Endothelial cell of umbilical vein (primary cell): ENCODE measurements at regions of chr9 and their contacts with region 1.

Region 1: DNA sequence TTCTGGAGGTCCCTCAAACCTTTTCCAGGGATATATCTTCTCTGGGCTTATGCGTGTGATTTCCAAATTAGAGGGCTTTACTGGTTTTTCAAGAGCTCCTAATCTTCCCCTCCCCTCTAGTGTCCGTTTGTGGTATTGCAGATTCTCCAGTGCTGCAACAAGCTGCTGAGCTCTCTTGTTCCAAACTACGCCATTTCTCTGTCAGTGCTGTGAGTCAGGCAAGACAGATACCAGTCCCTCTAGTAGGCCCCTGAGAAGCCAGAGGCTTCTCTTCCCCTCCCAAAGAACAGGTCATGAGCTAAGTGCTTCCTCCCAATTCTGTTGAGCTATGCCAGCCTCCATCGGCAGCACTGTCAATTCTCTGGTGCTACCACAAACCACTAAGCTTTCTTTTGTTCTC is 149.5 kb downstream of the FANCC start:
- DNase-seq: peak; percentile 82
- H3K4me3 ChIP-seq: no peak overlapping the region
- H3K27ac ChIP-seq: no peak overlapping the region
- H3K4me1 ChIP-seq: peaks cover 16% of the 10 kb centered on the region
- H3K27me3 ChIP-seq: no peaks in the 10 kb centered on the region
- CTCF ChIP-seq: peak; percentile 74 to 82
- POLR2A ChIP-seq: no peak

Region 2: GRCh38 chr9:94681508-94681907 is 486.5 kb before region 1 on chr9:
- CTCF ChIA-PET with region 1: interaction called, 94 read pairs
- POLR2A ChIA-PET with region 1: interaction called, 4 read pairs
- dilution Hi-C with region 1: no loop called
- intact Hi-C with region 1: loop called (anchors 1 kb)
- DNase-seq: peak; percentile 67
- H3K4me3 ChIP-seq: no peak overlapping the region
- H3K27ac ChIP-seq: no peak overlapping the region
- H3K4me1 ChIP-seq: no peaks in the 10 kb centered on the region
- H3K27me3 ChIP-seq: peaks cover 3 to 4% of the 10 kb centered on the region in 2 experiments
- CTCF ChIP-seq: peak; percentile 68 to 74
- POLR2A ChIP-seq: no peak

Region 3: DNA sequence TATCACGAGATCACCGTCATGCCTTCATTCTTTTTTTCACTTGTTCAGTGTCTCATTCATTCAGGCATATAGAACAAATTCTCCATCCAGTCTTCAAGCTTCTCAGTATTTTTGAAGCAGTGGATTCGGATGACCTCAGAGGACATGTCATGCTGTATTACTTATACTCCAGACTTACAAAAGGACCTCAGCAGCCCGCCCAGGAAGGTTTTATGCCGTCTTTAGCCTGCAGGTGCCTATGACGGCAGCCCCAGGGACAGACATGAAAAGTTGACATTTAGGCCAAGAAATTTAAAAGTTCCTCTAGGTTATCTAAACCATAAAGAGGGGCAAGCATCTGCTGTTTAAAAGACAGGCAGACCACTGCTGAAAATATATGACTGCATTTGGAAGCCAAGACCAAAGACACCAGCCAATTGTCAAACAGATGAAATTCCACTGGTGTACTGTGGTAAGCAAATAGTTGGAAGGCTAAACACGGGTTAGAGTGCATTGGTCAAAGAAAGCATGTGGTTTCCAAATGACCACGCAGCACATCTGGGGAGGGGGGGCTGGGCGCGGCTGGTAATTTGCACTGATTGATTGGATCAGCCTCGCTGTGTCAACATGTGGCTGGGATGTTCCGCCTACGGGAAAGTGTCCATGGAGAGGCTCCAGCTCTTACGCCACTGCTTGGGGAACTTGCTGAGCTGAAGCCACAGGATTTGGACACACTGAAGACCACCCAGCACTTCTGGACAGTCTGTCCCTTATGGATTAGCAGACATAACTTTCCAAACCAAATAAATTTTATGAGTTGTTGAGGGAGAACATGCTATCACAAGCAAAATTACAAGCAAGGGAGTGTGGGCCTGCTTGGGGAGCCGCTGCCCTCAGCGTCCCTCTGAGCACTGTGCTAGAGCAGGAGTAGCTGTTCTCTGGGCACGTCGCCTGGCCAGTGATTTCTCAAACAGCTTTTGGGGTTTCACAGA is 24.1 kb before region 1 on chr9:
- CTCF ChIA-PET with region 1: interaction called, 22 read pairs
- POLR2A ChIA-PET with region 1: no interaction called
- dilution Hi-C with region 1: no loop called
- intact Hi-C with region 1: no loop called
- DNase-seq: no peak
- H3K4me3 ChIP-seq: no peak overlapping the region
- H3K27ac ChIP-seq: no peak overlapping the region
- H3K4me1 ChIP-seq: no peaks in the 10 kb centered on the region
- H3K27me3 ChIP-seq: no peaks in the 10 kb centered on the region
- CTCF ChIP-seq: no peak
- POLR2A ChIP-seq: no peak

Region 4: DNA sequence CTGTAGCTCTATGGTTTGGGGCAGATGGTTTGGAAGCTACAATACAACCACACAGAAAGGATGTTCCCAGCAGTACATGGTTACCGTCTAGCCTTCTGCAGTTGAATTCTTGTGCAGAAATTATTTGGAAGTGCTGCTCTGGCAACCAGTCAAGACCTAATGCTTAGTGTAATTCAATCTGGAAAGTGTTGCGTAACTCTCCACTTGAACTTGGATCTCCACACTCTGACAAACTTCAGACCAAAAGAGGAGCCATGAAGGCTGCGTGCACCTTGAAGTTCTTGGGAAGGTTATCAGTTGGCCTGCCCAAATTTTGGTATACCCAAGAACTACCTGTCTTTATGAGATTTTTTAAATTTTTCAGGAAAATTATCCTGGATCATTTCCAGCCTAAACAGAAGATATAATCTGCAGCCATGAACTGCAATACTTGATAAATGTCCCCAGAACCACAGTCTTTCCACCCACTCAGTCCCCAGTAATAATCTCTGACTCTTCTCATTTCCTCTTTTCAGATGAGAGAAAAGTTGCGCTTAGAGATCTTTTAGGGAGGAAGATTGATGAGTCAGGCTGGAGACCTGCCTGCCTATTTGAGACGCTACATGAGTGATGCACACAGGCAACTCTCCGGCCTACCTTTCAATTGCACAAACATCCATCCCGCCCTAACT is 10.4 kb before region 1 on chr9:
- CTCF ChIA-PET with region 1: interaction called, 33 read pairs
- POLR2A ChIA-PET with region 1: no interaction called
- dilution Hi-C with region 1: no loop called
- intact Hi-C with region 1: no loop called
- DNase-seq: peak; percentile 10
- H3K4me3 ChIP-seq: no peak overlapping the region
- H3K27ac ChIP-seq: no peak overlapping the region
- H3K4me1 ChIP-seq: no peaks in the 10 kb centered on the region
- H3K27me3 ChIP-seq: no peaks in the 10 kb centered on the region
- CTCF ChIP-seq: no peak
- POLR2A ChIP-seq: no peak

Region 5: GRCh38 chr9:95189251-95190098 is 21.5 kb after region 1 on chr9:
- CTCF ChIA-PET with region 1: interaction called, 14 read pairs
- POLR2A ChIA-PET with region 1: no interaction called
- dilution Hi-C with region 1: no loop called
- intact Hi-C with region 1: no loop called
- DNase-seq: peak; percentile 95
- H3K4me3 ChIP-seq: peak overlapping the region in 2 of 3 experiments; percentile 24 to 41
- H3K27ac ChIP-seq: peak overlapping the region; percentile 89
- H3K4me1 ChIP-seq: peaks cover 25% of the 10 kb centered on the region
- H3K27me3 ChIP-seq: no peaks in the 10 kb centered on the region
- CTCF ChIP-seq: no peak
- POLR2A ChIP-seq: no peak

Region 6: GRCh38 chr9:95268681-95269080 is 100.7 kb after region 1 on chr9:
- CTCF ChIA-PET with region 1: interaction called, 12 read pairs
- POLR2A ChIA-PET with region 1: no interaction called
- dilution Hi-C with region 1: no loop called
- intact Hi-C with region 1: no loop called
- DNase-seq: peak; percentile 47
- H3K4me3 ChIP-seq: no peak overlapping the region
- H3K27ac ChIP-seq: no peak overlapping the region
- H3K4me1 ChIP-seq: no peaks in the 10 kb centered on the region
- H3K27me3 ChIP-seq: no peaks in the 10 kb centered on the region
- CTCF ChIP-seq: peak; percentile 12 to 37
- POLR2A ChIP-seq: no peak